ENCODE measurements at regions of chr1 and their contacts with region 1.

Region 1: GRCh38 chr1:42657971-42658879 is at the start of gene PPIH:
- DNase-seq: peak; percentile 95
- ATAC-seq: peak; percentile 100
- H3K4me3 ChIP-seq: peak within 1 kb of the TSS; percentile 54 to 99 (median 82)
- H3K27ac ChIP-seq: peak within 1 kb of the TSS in 9 of 10 donors; percentile 65 to 90 (median 85)
- H3K4me1 ChIP-seq: peaks cover 0 to 24% (median 13%) of the 10 kb centered on the region in 9 donors
- H3K27me3 ChIP-seq: no peaks in the 10 kb centered on the region
- CTCF ChIP-seq: peak in 8 of 9 donors; percentile 9 to 50 (median 35)
- total RNA-seq, gene PPIH: 15.2 to 23.0 (median 18.3) TPM

Region 2: DNA sequence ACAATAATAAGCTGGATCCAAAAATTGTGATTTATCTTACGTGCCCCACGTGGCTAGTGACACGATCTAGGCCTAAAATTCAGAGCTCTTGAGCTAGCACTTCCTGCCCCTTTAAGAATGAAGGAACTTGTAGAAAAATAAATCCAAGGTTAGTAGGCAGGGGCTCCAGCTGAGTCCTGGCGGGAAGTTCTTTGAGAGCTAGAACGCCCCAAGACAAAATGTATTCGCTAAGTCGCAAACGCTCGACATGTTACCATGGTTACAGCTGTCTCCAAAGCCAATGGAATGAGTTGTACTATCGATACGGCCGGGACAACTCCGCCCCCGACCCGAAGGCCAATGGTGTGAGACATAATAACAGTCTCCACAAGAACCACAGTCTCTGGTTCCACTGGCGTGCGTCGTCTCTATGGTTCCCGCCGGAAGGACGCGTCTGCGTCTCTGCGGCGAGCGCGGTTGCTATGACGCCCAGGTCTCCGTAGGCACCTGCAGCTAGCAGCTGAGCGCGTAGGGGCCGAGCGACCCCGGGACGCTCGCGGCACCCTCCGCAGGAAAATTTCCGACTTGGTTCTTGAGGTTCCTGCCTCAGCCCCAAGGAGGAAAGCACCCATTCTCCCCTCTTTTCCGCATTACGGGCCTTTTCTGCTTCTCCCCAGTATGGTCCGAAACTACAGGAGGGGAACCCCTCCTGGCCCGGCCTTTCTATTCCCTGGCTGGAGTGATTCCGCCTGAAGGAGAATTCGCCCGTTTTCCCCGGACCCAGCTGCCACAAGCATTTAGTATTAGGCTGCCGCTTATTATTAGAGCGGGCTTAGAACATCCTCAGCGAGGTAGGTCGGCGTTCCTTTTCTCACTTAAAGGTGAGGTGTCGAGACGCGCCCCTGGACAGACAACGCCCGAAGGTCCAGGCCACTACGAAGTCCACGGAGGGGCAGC is 195.1 kb before region 1 on chr1 and contains the start of gene CCDC30:
- intact Hi-C with region 1: loop called in 1 of 10 experiments (anchors 10 kb)
- DNase-seq: peak; percentile 90 to 96
- ATAC-seq: peak; percentile 99 to 100 (median 100)
- H3K4me3 ChIP-seq: peak within 1 kb of the TSS; percentile 47 to 89 (median 76)
- H3K27ac ChIP-seq: peak within 1 kb of the TSS in 6 of 10 donors; percentile 28 to 61 (median 51)
- H3K4me1 ChIP-seq: peaks cover 0 to 25% (median 19%) of the 10 kb centered on the region in 9 donors
- H3K27me3 ChIP-seq: no peaks in the 10 kb centered on the region
- CTCF ChIP-seq: no peak
- total RNA-seq, gene CCDC30: 0.70 to 3.2 (median 1.4) TPM

Measured in heart right ventricle (tissue), 16 donors.